Gastrocnemius medialis (tissue), 4 donors: ENCODE measurements at regions of chr17 and their contacts with region 1.

Region 1: DNA sequence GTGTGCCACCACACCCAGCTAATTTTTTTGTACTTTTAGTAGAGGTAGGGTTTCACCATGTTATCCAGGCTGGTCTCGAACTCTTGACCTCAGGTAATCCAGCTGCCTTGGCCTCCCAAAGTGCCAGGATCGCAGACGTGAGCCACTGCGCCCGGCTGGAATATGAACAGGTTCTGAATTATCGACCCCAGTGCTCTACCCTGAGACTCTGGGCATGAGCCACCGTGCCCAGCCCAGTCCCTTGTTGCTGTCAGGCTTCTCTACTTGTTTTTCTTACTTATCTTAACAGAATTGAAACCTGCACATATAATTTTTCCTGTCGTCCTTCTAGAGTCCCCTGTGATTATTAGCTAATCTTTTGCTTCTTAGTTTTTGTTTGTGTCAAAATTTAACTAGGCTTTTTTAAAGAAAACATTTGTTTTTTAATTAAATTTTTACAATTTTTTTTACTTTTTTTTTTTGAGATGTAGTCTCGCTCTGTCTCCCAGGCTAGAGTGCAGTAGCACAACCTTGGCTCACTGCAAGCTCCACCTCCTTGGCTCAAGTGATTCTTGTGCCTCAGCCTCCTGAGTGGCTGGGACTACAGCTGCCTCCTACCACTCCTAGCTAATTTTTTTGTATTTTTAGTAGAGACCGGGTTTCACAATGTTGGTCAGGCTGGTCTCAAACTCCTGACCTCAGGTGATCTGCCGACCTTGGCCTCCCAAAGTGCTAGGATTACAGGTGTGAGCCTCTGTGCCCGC is 66.7 kb downstream of the AP2B1 start:
- DNase-seq: no peak
- ATAC-seq: no peak
- H3K4me3 ChIP-seq: no peak overlapping the region
- H3K27ac ChIP-seq: peak overlapping the region in 1 of 4 donors; percentile 27
- H3K4me1 ChIP-seq: peaks cover 5 to 13% of the 10 kb centered on the region in 2 donors
- H3K27me3 ChIP-seq: no peaks in the 10 kb centered on the region
- CTCF ChIP-seq: no peak
- POLR2A ChIP-seq: no peak

Region 2: GRCh38 chr17:35119368-35120165 is 534.2 kb before region 1 on chr17 and contains the start of gene RAD51D:
- in situ Hi-C with region 1: no loop called
- intact Hi-C with region 1: no loop called
- DNase-seq: peak; percentile 23 to 46
- ATAC-seq: peak; percentile 91 to 96
- H3K4me3 ChIP-seq: peak within 1 kb of the TSS; percentile 70 to 98 (median 75)
- H3K27ac ChIP-seq: peak within 1 kb of the TSS; percentile 64 to 79 (median 73)
- H3K4me1 ChIP-seq: peaks cover 6 to 7% of the 10 kb centered on the region in 2 donors
- H3K27me3 ChIP-seq: no peaks in the 10 kb centered on the region
- CTCF ChIP-seq: peak; percentile 85 to 99 (median 96)
- POLR2A ChIP-seq: no peak
- total RNA-seq, gene RAD51D: 2.5 to 5.2 (median 2.8) TPM

Region 3: GRCh38 chr17:35578197-35578928 is 75.4 kb before region 1 on chr17 and contains the start of gene PEX12:
- in situ Hi-C with region 1: no loop called
- intact Hi-C with region 1: no loop called
- DNase-seq: peak; percentile 87 to 91
- ATAC-seq: peak; percentile 98 to 100
- H3K4me3 ChIP-seq: peak within 1 kb of the TSS; percentile 68 to 88 (median 80)
- H3K27ac ChIP-seq: peak within 1 kb of the TSS; percentile 85 to 94 (median 90)
- H3K4me1 ChIP-seq: peaks cover 18 to 24% of the 10 kb centered on the region in 2 donors
- H3K27me3 ChIP-seq: no peaks in the 10 kb centered on the region
- CTCF ChIP-seq: peak in 1 of 5 experiments; percentile 15
- POLR2A ChIP-seq: peak; percentile 70 to 84
- total RNA-seq, gene PEX12: 4.4 to 14.2 (median 6.2) TPM

Region 4: DNA sequence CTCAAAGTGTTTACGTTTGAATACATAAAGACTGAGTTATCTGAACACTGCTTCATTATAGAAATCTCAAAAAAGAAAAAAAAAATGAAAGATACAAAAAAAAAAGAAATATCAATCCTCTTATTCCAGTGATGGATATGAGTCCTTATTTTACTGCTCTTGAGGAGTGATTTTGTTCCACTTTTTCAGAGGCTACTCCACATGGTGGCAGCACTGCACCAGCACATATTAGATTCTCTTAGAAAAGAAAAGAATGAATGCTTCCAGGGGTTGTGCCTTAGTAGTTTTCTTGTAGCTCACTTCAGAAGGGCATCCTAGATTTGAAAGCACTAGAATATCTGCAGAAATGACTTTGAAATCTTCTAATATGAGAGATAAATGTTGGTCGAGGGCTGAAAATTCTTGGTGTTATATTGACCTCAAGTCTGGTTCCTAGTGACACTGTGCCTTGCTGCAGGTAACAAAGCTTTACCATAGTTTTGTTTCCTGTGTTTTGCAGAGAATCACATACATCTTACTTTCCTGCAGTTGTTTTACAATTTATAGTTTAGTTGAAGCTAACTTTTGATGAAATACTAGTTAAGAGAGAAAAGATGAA is 40.8 kb before region 1 on chr17:
- in situ Hi-C with region 1: no loop called
- intact Hi-C with region 1: loop called (anchors 5 kb)
- DNase-seq: peak in 1 of 2 donors; percentile 54
- ATAC-seq: peak in 1 of 2 donors; percentile 40
- H3K4me3 ChIP-seq: no peak overlapping the region
- H3K27ac ChIP-seq: peak overlapping the region in 1 of 4 donors; percentile 17
- H3K4me1 ChIP-seq: peaks cover 33 to 44% of the 10 kb centered on the region in 2 donors
- H3K27me3 ChIP-seq: no peaks in the 10 kb centered on the region
- CTCF ChIP-seq: peak; percentile 49 to 67 (median 60)
- POLR2A ChIP-seq: no peak